ENCODE measurements at regions of chr18 and their contacts with region 1.

Region 1: GRCh38 chr18:69935319-69936190 is 12.1 kb downstream of the CD226 start:
- DNase-seq: peak; percentile 91
- H3K4me3 Mint-ChIP-seq: no peak overlapping the region
- H3K27ac Mint-ChIP-seq: no peak overlapping the region
- H3K4me1 Mint-ChIP-seq: peaks cover 18% of the 10 kb centered on the region
- H3K27me3 Mint-ChIP-seq: no peaks in the 10 kb centered on the region

Region 2: DNA sequence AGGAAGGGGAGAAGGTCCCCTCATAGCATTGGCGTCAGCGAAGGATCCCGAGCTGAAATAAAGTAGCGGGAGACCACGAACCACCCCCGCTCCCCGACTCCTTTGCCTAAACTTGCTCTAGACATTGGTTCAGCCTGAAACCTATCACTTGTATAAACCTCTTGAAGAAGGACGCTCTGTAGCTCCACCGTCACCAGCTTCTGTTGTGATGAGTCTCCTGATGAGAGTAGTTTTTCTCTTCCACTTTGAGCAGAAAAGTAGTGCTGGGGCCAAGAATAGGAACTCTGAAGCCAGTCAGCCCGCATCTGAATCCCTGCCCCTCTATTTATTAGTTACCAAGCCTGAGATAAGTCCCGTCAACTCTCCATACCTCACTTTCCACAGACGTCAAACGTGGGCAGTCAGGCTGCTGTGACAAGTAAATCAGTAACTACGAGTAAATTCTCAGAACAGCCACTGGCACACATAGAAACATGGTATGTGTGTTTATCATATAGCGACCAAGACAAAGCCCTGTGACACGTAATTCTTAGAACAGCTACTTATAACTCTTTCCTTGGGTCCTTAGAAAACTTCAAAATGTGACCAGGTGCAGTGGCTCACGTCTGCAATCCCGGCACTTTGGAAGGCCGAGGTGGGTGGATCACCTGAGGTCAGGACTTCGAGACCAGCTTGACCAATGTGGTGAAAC is 49.6 kb before region 1 on chr18:
- CTCF ChIA-PET with region 1: no interaction called
- POLR2A ChIA-PET with region 1: interaction called, 13 read pairs
- DNase-seq: peak; percentile 71
- H3K4me3 Mint-ChIP-seq: peak overlapping the region; percentile 60
- H3K27ac Mint-ChIP-seq: peak overlapping the region; percentile 90
- H3K4me1 Mint-ChIP-seq: peaks cover 78% of the 10 kb centered on the region
- H3K27me3 Mint-ChIP-seq: no peaks in the 10 kb centered on the region

Region 3: DNA sequence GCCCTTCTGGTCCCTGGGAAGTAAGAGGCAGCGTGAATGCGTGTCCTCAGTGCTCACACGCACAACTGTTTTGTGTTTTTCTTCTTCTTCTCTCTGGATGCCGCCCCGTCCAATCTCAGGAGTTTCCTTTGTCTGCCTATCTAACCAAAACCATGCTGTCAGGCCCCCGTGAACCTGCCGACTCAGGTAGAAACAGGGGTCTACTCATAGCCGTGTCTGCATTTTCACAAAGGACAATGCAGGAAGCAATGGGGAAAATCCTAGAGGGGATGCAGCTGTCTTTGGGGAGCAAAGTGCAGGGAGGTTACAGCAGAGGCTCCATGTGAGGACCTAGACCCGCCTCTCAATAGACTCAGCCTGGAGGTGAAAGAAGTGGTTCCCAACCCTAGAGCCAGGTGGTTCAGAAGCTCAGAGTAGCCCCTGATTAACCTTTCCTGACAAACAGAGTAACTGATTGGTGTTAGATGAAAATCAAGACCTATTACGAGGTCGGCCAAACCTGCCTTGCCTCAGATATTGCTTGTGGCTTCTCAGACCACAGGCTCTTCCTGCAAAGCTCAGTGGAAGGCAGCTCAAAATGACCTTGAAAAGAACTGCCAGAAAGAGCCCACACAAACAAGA is 37.2 kb before region 1 on chr18:
- CTCF ChIA-PET with region 1: interaction called, 18 read pairs
- POLR2A ChIA-PET with region 1: interaction called, 61 read pairs
- DNase-seq: peak; percentile 62
- H3K4me3 Mint-ChIP-seq: peak overlapping the region; percentile 70
- H3K27ac Mint-ChIP-seq: peak overlapping the region; percentile 89
- H3K4me1 Mint-ChIP-seq: peaks cover 76% of the 10 kb centered on the region
- H3K27me3 Mint-ChIP-seq: no peaks in the 10 kb centered on the region

Region 4: GRCh38 chr18:69916412-69916811 is 19.1 kb before region 1 on chr18:
- CTCF ChIA-PET with region 1: no interaction called
- POLR2A ChIA-PET with region 1: interaction called, 15 read pairs
- DNase-seq: no peak
- H3K4me3 Mint-ChIP-seq: no peak overlapping the region
- H3K27ac Mint-ChIP-seq: no peak overlapping the region
- H3K4me1 Mint-ChIP-seq: peaks cover 39% of the 10 kb centered on the region
- H3K27me3 Mint-ChIP-seq: no peaks in the 10 kb centered on the region

Region 5: DNA sequence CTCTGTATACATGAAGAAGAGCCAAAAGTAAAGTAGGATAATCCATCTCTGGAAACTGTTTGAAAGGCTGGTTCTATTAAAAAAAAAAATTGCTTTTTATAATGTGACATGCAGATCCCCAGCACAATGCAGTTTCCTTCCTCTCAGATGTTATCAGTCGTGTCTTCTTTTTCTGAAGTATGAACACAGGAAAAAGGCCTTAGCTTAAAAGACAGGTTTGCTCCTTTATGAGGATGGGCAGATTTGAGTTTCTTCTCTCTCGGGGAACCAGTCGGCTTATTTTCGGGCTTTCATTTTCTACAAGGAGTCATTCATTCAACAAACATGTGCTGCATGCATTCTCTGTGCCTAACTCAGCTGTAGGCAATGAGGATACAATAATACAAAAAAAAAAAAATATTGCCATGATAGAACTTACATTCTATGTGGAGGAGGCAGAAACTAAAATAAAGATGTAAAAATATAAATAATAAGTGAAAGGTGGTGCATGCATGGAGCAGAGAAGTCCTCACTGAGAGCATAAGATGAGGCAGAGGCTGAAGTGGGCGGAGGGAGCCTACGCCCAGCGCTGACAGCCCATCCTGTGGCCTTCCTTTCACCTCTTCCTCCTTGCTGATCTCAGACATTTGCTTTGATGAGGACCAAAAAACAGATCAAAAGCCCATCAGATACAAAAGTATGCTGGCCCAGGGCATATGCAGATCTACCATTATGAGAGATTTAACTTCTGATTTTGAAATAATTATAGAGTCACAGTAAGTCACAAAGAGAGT is 12.0 kb after region 1 on chr18 and contains the start of gene CD226:
- CTCF ChIA-PET with region 1: interaction called, 33 read pairs
- POLR2A ChIA-PET with region 1: interaction called, 84 read pairs
- DNase-seq: peak; percentile 60
- H3K4me3 Mint-ChIP-seq: no peak within 1 kb of the TSS
- H3K27ac Mint-ChIP-seq: no peak within 1 kb of the TSS
- H3K4me1 Mint-ChIP-seq: peaks cover 48% of the 10 kb centered on the region
- H3K27me3 Mint-ChIP-seq: no peaks in the 10 kb centered on the region
- total RNA-seq, gene CD226: 102 to 111 TPM

Region 6: GRCh38 chr18:69958422-69958821 is 22.9 kb after region 1 on chr18:
- CTCF ChIA-PET with region 1: interaction called, 15 read pairs
- POLR2A ChIA-PET with region 1: interaction called, 81 read pairs
- DNase-seq: peak; percentile 52
- H3K4me3 Mint-ChIP-seq: no peak overlapping the region
- H3K27ac Mint-ChIP-seq: no peak overlapping the region
- H3K4me1 Mint-ChIP-seq: peaks cover 15% of the 10 kb centered on the region
- H3K27me3 Mint-ChIP-seq: no peaks in the 10 kb centered on the region